ENCODE measurements at regions of chr1 and their contacts with region 1.

Region 1: GRCh38 chr1:21255278-21255942 is 34.9 kb downstream of the ECE1 start:
- DNase-seq: peak; percentile 62 to 95
- H3K4me3 ChIP-seq: no peak overlapping the region
- H3K27ac ChIP-seq: no peak overlapping the region
- H3K4me1 ChIP-seq: no peaks in the 10 kb centered on the region
- H3K27me3 ChIP-seq: no peaks in the 10 kb centered on the region
- CTCF ChIP-seq: peak; percentile 82 to 98 (median 97)
- EP300 ChIP-seq: no peak
- POLR2A ChIP-seq: no peak
- RAD21 ChIP-seq: peak; percentile 95 to 96

Region 2: GRCh38 chr1:21232044-21232443 is 23.4 kb before region 1 on chr1:
- CTCF ChIA-PET with region 1: interaction called, 106 read pairs
- POLR2A ChIA-PET with region 1: no interaction called
- DNase-seq: peak in 1 of 2 experiments; percentile 59
- H3K4me3 ChIP-seq: no peak overlapping the region
- H3K27ac ChIP-seq: no peak overlapping the region
- H3K4me1 ChIP-seq: no peaks in the 10 kb centered on the region
- H3K27me3 ChIP-seq: no peaks in the 10 kb centered on the region
- CTCF ChIP-seq: peak; percentile 25 to 75 (median 75)
- EP300 ChIP-seq: no peak
- POLR2A ChIP-seq: no peak
- RAD21 ChIP-seq: peak; percentile 89 to 90

Region 3: GRCh38 chr1:21244986-21245687 is 10.3 kb before region 1 on chr1:
- CTCF ChIA-PET with region 1: interaction called, 63 read pairs
- POLR2A ChIA-PET with region 1: interaction called, 3 read pairs
- DNase-seq: peak in 1 of 2 experiments; percentile 82
- H3K4me3 ChIP-seq: no peak overlapping the region
- H3K27ac ChIP-seq: no peak overlapping the region
- H3K4me1 ChIP-seq: peaks cover 0 to 2% (median 0%) of the 10 kb centered on the region in 4 experiments; a peak in 3 of 7 replicates
- H3K27me3 ChIP-seq: no peaks in the 10 kb centered on the region
- CTCF ChIP-seq: peak; percentile 84 to 88 (median 87)
- EP300 ChIP-seq: no peak
- POLR2A ChIP-seq: no peak
- RAD21 ChIP-seq: peak; percentile 46 to 55

Region 4: DNA sequence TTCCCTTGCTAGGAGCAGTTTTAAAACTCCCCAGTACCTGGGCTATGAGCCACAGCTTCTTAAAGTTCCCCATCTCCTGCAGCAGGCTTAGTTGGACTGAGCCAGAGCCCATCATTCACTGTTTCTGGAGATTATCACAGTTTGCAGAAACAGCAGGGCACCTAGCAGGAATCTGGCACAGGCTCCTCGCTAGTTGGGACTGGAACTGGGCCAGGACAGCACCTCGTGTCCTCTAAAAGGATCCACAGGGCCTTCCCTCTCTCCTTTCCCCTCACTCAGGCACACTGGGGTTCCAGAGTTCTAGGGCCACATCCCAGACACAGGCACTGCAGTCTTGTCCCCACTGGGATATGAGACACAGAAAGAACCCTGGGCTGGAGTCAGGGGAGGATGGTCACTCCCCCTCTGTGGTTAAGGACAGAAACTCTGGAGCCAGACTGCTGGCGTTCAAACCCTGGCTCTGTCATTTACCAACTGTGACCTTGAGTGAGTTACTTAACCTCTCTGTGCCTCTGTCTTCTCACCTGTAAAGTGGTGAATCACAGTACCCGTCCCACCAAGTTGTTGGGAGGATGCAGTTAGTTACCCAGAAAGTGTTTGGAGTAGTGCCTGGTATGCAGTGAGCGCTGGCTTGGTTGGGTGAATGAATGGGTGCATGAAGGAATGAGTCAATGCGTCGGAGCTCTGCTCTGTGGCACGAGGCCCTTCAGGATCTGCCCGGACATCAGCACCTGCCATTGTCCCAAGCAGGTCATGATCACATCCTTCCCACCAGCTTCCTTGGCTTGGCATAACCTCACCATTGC is 53.6 kb after region 1 on chr1:
- CTCF ChIA-PET with region 1: interaction called, 14 read pairs
- POLR2A ChIA-PET with region 1: no interaction called
- DNase-seq: no peak
- H3K4me3 ChIP-seq: no peak overlapping the region
- H3K27ac ChIP-seq: no peak overlapping the region
- H3K4me1 ChIP-seq: peaks cover 15 to 40% (median 22%) of the 10 kb centered on the region in 4 experiments
- H3K27me3 ChIP-seq: no peaks in the 10 kb centered on the region
- CTCF ChIP-seq: no peak
- EP300 ChIP-seq: no peak
- POLR2A ChIP-seq: no peak
- RAD21 ChIP-seq: no peak

Region 5: DNA sequence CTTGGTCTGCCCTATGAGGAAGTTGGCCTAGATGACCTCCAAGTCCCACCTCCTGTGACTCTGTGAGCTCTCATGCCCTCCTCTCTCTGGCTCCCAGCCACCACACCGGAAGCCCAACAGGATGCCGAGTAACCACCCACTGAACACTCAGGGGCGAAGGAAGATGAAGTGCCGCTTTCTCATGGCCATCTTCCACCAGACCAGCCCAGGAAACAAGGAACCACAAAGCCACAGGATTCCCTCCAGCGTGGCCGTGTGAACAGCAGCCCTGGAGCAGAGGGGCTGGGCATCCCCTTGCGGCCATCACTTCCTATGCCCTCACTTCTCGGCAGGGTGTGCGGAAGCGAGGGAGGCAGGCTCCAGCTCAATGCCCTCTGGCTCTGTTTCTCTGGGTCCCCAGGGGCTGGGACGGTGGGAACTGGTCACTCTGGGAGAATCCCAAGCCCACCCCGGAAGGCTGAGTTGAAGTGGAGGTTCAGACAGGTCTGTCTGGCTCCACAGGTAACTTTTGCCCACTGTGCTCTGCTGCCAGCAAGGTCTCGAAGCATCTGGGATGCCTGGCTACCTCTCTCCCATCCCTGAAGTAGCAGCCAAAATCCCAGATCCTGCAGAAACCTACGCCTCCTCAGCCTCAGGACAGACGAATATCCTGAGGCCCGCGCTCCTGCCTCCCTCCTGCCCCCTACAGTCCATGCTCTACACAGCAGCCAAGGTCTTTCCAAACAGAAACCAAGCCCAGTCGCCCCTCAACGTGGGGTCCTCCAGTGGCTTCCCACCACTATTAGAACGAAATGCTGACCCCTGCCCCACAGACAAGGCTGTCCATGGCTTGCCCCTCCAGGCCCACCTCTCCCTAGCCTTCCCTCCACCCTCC is 79.0 kb after region 1 on chr1:
- CTCF ChIA-PET with region 1: interaction called, 108 read pairs
- POLR2A ChIA-PET with region 1: interaction called, 3 read pairs
- DNase-seq: peak in 1 of 2 experiments; percentile 89
- H3K4me3 ChIP-seq: peak overlapping the region in 3 of 4 experiments; percentile 19 to 45 (median 29); a peak in 6 of 8 replicates
- H3K27ac ChIP-seq: no peak overlapping the region
- H3K4me1 ChIP-seq: peaks cover 10 to 31% (median 20%) of the 10 kb centered on the region in 4 experiments
- H3K27me3 ChIP-seq: no peaks in the 10 kb centered on the region; a peak in 1 of 7 replicates
- CTCF ChIP-seq: peak; percentile 90 to 96 (median 93)
- EP300 ChIP-seq: no peak
- POLR2A ChIP-seq: no peak
- RAD21 ChIP-seq: peak; percentile 75 to 86

Region 6: DNA sequence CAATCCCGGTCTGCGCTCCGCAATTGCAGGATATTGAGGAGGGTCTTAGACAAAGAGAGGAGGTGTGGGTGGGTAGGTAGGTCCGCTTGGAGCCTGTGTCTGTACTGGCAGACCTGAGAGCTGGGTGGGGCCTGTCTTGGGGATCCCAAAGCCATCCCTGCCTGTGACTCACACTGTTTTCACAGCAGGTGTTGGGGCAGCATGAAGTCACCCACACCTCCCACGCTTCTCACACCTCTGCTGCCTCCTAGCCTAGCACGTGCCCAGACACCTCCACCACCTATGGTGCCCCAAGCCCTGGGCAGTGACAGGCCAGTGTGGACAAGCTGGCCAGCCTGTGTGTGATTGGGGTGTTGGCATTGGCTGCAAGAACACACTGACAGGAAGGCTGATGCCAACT is 100.5 kb after region 1 on chr1:
- CTCF ChIA-PET with region 1: interaction called, 41 read pairs
- POLR2A ChIA-PET with region 1: no interaction called
- DNase-seq: no peak
- H3K4me3 ChIP-seq: no peak overlapping the region
- H3K27ac ChIP-seq: no peak overlapping the region
- H3K4me1 ChIP-seq: peaks cover 0 to 2% (median 0%) of the 10 kb centered on the region in 4 experiments; a peak in 1 of 7 replicates
- H3K27me3 ChIP-seq: no peaks in the 10 kb centered on the region
- CTCF ChIP-seq: no peak
- EP300 ChIP-seq: no peak
- POLR2A ChIP-seq: no peak
- RAD21 ChIP-seq: no peak

Region 7: GRCh38 chr1:21447311-21447710 is 191.9 kb after region 1 on chr1:
- CTCF ChIA-PET with region 1: no interaction called
- POLR2A ChIA-PET with region 1: no interaction called
- DNase-seq: no peak
- H3K4me3 ChIP-seq: no peak overlapping the region
- H3K27ac ChIP-seq: no peak overlapping the region
- H3K4me1 ChIP-seq: no peaks in the 10 kb centered on the region
- H3K27me3 ChIP-seq: no peaks in the 10 kb centered on the region
- CTCF ChIP-seq: no peak
- EP300 ChIP-seq: no peak
- POLR2A ChIP-seq: no peak
- RAD21 ChIP-seq: no peak